ENCODE measurements at regions of chr3 and their contacts with region 1.

Region 1: GRCh38 chr3:185983495-185984141 is 45.8 kb upstream of the TRA2B start:
- DNase-seq: peak; percentile 88
- H3K4me3 ChIP-seq: peak overlapping the region; percentile 31
- H3K27ac ChIP-seq: peak overlapping the region; percentile 35
- H3K4me1 ChIP-seq: peaks cover 19% of the 10 kb centered on the region
- H3K27me3 ChIP-seq: no peaks in the 10 kb centered on the region
- CTCF ChIP-seq: peak; percentile 92

Region 2: GRCh38 chr3:185353823-185354614 is 629.6 kb before region 1 on chr3:
- CTCF ChIA-PET with region 1: interaction called, 13 read pairs
- POLR2A ChIA-PET with region 1: no interaction called
- intact Hi-C with region 1: no loop called
- DNase-seq: peak; percentile 91
- H3K4me3 ChIP-seq: no peak overlapping the region
- H3K27ac ChIP-seq: no peak overlapping the region
- H3K4me1 ChIP-seq: no peaks in the 10 kb centered on the region
- H3K27me3 ChIP-seq: no peaks in the 10 kb centered on the region
- CTCF ChIP-seq: peak; percentile 71

Region 3: GRCh38 chr3:186057594-186057993 is 74.0 kb after region 1 on chr3:
- CTCF ChIA-PET with region 1: no interaction called
- POLR2A ChIA-PET with region 1: no interaction called
- intact Hi-C with region 1: no loop called
- DNase-seq: peak; percentile 38
- H3K4me3 ChIP-seq: no peak overlapping the region
- H3K27ac ChIP-seq: no peak overlapping the region
- H3K4me1 ChIP-seq: peaks cover 15% of the 10 kb centered on the region
- H3K27me3 ChIP-seq: no peaks in the 10 kb centered on the region
- CTCF ChIP-seq: no peak

Region 4: GRCh38 chr3:186108941-186109865 is 125.6 kb after region 1 on chr3 and contains the start of gene ETV5:
- CTCF ChIA-PET with region 1: no interaction called
- POLR2A ChIA-PET with region 1: no interaction called
- intact Hi-C with region 1: loop called (anchors 2 kb)
- DNase-seq: peak; percentile 100
- H3K4me3 ChIP-seq: peak within 1 kb of the TSS; percentile 70
- H3K27ac ChIP-seq: peak within 1 kb of the TSS; percentile 89
- H3K4me1 ChIP-seq: peaks cover 35% of the 10 kb centered on the region
- H3K27me3 ChIP-seq: no peaks in the 10 kb centered on the region
- CTCF ChIP-seq: no peak
- total RNA-seq, gene ETV5: 87.4 and 92.9 TPM in 2 replicates

Region 5: DNA sequence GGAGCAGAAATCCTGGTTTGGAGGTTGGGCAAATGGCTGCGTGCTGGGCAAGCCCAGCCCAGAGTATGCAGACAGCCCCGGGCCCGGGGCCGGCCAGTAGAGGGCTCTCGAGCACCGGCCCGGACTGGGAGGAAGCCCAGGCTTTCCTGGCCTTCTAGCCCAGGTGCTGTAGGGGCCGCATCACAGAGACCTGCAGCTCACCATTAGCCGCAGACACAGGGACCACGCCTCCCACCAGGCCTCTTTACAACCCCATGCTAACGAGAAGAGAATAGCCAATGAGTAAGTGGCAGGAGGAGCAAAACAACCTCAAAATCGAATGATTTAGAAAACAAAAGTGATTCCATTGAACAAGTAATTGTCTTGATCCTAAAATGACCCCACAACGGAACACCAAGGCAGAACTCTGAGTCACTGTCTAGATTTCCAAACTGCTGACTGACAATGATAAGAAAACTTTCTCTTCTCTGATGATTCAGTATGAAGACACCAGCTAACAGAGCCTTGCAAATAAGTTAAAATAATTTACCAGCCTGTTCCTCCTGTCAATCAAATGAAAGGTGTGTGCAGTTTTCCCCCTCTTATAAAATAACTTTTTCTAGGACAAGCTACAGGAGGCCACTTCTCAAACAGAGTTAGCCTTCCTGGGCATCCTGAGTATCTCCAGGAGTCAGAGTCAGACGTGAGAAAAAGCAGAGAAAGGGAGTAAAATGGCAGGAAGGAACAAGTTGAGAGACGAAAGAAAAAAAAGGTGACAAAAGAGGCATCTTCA is 276.2 kb after region 1 on chr3:
- CTCF ChIA-PET with region 1: interaction called, 3 read pairs
- POLR2A ChIA-PET with region 1: no interaction called
- intact Hi-C with region 1: loop called (anchors 5 kb)
- DNase-seq: peak; percentile 68
- H3K4me3 ChIP-seq: no peak overlapping the region
- H3K27ac ChIP-seq: no peak overlapping the region
- H3K4me1 ChIP-seq: peaks cover 18% of the 10 kb centered on the region
- H3K27me3 ChIP-seq: no peaks in the 10 kb centered on the region
- CTCF ChIP-seq: peak; percentile 92

Region 6: GRCh38 chr3:186540221-186540834 is 556.7 kb after region 1 on chr3:
- CTCF ChIA-PET with region 1: interaction called, 8 read pairs
- POLR2A ChIA-PET with region 1: no interaction called
- intact Hi-C with region 1: loop called (anchors 1 kb)
- DNase-seq: peak; percentile 86
- H3K4me3 ChIP-seq: no peak overlapping the region
- H3K27ac ChIP-seq: no peak overlapping the region
- H3K4me1 ChIP-seq: peaks cover 9% of the 10 kb centered on the region
- H3K27me3 ChIP-seq: no peaks in the 10 kb centered on the region
- CTCF ChIP-seq: peak; percentile 86